Breast epithelium (tissue), 4 donors: ENCODE measurements at regions of chr17 and their contacts with region 1.

Region 1: GRCh38 chr17:45954914-45955313 is 44.1 kb upstream of the STH start:
- DNase-seq: no peak
- H3K4me3 ChIP-seq: no peak overlapping the region
- H3K27ac ChIP-seq: no peak overlapping the region
- H3K4me1 ChIP-seq: no peaks in the 10 kb centered on the region
- H3K27me3 ChIP-seq: no peaks in the 10 kb centered on the region
- CTCF ChIP-seq: no peak
- POLR2A ChIP-seq: no peak

Region 2: DNA sequence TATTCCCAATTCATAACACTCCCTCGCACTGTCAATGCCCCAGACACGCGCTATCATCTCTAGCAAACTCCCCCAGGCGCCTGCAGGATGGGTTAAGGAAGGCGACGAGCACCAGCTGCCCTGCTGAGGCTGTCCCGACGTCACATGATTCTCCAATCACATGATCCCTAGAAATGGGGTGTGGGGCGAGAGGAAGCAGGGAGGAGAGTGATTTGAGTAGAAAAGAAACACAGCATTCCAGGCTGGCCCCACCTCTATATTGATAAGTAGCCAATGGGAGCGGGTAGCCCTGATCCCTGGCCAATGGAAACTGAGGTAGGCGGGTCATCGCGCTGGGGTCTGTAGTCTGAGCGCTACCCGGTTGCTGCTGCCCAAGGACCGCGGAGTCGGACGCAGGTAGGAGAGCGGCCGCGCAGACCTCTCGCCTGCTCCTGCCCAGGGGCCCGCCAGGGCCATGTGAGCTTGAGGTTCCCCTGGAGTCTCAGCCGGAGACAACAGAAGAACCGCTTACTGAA is 1609.9 kb before region 1 on chr17 and contains the start of gene GRN:
- intact Hi-C with region 1: no loop called
- DNase-seq: peak; percentile 90 to 98
- H3K4me3 ChIP-seq: peak within 1 kb of the TSS; percentile 68 to 84 (median 77)
- H3K27ac ChIP-seq: peak within 1 kb of the TSS; percentile 81 to 92
- H3K4me1 ChIP-seq: no peaks in the 10 kb centered on the region
- H3K27me3 ChIP-seq: no peaks in the 10 kb centered on the region
- CTCF ChIP-seq: no peak
- POLR2A ChIP-seq: peak; percentile 33
- total RNA-seq, gene GRN: 166 to 372 (median 252) TPM

Region 3: DNA sequence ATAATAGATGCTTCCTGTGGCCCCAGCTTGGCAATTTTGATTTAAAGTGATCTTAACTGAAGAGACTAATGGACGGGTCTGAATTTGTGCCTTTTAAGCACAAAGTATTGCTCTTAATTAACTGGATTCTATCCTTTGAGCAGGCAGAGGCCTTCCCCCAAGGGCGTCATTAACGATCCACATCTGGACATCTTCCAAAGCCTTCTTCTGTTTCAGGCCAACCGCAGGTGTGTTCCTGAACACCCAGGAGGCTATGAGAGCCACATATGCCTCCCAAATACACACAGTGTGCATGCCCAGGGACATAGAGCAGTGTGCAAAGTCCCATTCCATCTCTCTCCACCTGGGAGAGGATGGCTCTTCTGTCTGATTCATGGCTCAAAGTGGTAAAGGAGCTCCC is 18.3 kb before region 1 on chr17:
- intact Hi-C with region 1: loop called (anchors 2 kb)
- DNase-seq: peak in 1 of 2 donors; percentile 27
- H3K4me3 ChIP-seq: no peak overlapping the region
- H3K27ac ChIP-seq: peak overlapping the region in 1 of 2 donors; percentile 61
- H3K4me1 ChIP-seq: no peaks in the 10 kb centered on the region
- H3K27me3 ChIP-seq: no peaks in the 10 kb centered on the region
- CTCF ChIP-seq: no peak
- POLR2A ChIP-seq: no peak

Region 4: DNA sequence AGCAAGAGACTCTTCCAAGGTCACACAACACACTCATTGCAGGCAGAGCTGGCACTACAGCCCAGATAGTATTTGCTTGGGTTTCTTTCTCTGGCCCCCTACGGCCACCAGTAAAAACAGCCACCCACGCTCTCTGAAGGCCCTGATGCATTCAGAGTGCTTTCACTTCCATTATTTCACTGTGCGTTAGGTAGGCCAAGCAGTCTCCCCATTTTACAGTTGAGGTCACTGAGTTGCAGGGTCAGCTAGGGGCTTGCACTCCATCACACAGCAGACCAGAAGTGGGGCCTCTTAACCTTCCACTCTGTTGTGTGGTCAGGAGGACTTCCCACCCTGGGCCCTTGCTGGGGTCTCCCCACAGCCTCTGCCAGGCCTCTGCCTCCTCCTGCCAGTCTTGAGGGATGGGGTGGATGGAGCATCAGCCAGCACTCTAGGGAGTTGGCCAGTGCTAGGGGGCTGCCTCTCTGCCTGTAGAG is 1780.7 kb after region 1 on chr17:
- intact Hi-C with region 1: loop called (anchors 5 kb)
- DNase-seq: peak in 1 of 2 donors; percentile 10
- H3K4me3 ChIP-seq: no peak overlapping the region
- H3K27ac ChIP-seq: no peak overlapping the region
- H3K4me1 ChIP-seq: peaks cover 0 to 7% of the 10 kb centered on the region in 2 donors
- H3K27me3 ChIP-seq: peaks cover 5 to 43% of the 10 kb centered on the region in 2 donors
- CTCF ChIP-seq: no peak
- POLR2A ChIP-seq: no peak